GM13977 (cell line): ENCODE measurements at regions of chr2 and their contacts with region 1.

Region 1: DNA sequence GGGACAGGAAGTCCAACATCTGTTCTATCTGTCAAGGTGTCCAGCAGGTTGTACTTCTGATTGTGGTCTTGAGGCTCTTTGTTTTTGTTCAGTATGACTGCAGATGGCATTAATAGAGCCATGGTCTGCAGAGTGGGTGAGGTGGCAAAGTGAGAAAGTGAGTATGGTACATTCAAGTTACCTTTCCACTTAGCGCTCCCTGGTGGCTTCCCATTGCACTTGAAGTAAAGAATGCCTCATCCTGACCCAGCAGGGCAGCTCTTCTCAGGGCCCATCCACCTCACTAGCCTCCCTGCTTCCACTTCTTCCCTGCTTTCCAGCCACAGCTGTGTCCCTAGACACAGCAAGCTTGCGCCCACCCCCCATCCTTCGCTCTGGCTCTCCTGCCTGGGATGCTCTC is 148.0 kb upstream of the ALPP start:
- DNase-seq: no peak
- CTCF ChIP-seq: peak; percentile 33

Region 2: DNA sequence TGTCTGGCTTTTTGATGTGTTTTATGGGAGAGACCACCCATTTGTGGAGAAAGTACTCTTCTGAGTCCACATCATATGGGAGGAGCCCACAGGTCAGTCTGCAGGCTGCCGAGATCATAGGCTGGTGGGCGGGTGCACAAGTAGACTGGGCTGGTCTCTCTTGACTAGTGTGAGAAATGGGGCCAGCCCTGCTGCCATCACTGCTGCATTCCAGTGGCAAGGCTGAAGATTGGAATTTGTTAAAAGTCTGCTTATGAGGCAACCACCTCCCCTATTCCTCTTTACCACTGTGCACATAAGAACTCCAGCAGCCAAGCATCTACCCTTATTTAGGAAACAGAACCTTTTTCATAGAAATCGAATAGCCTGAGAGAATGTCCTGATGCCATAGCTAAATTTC is 68.4 kb before region 1 on chr2:
- in situ Hi-C with region 1: loop called (anchors 10 kb)
- DNase-seq: no peak
- CTCF ChIP-seq: no peak